Activated B cell treated with CpG ODN at 0.5 μM for 24 hours (primary cell): ENCODE measurements at regions of chr1 and their contacts with region 1.

Region 1: DNA sequence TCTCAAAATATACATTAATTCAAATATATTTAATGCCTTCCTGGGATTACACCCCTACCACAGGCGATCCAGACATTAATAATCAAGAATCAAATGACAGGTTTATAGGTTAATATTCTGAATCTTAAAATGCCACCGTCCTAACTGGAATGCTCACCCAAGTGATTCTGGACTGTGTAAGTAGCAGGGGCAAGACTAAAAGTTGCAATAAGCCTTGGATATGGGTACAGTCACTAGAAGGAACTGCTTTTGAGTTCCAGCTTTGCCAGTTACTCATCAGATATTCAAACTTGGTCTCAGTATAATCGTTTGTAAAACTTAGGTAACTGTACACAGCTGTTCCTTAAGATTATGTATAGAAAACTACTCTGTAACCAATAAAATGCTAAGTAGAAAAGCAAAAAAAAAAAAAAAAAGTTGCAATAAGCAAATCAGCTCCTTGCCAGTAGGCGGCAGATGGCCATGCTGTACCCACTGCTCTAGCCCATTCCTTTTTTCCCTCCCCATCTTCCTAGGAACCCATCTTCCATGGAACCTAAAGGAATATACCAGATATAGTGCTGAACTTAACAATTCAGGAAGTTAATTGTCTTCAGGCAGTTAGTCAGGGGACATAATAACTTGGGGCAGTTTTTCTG is 10.5 kb downstream of the RO60 start:
- DNase-seq: no peak
- ATAC-seq: peak; percentile 25
- H3K4me3 Mint-ChIP-seq: no peak overlapping the region
- H3K27ac Mint-ChIP-seq: peak overlapping the region; percentile 65
- H3K4me1 Mint-ChIP-seq: peaks cover 45% of the 10 kb centered on the region
- H3K27me3 Mint-ChIP-seq: no peaks in the 10 kb centered on the region
- CTCF ChIP-seq: no peak

Region 2: DNA sequence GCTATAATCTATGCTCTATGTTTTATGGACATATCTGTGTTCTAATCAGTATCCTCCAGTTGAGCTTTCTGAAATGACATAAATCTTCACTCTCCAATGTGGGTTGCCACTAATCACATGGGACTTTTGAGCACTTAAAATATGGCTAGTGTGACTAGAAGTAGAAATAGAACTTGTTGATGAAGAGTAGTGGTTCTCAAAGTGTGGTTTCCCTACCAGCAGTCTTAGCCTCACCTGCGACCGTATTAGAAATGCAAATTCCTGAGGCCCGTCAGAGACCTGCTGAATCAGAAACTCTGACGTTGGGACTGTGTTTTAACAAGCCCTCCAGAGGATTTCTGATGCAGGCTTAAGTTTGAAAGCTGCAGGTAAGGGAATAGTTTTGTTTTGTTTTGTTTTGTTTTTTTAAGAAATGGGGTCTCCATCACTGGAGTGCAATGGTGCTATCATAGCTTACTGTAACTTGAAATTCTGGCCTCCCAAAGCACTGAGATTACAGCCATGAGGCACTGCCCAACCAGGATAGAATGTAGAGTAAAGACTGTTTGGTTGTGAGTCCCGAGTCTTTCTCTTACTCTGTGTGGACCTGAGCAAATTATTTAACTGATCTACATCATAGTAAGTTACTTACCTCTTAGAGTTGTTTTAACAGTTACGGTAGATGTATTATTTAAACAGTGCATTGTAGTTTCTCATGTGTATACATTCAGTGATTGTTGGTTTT is 13.7 kb after region 1 on chr1:
- CTCF ChIA-PET with region 1: no interaction called
- POLR2A ChIA-PET with region 1: interaction called, 3 read pairs
- intact Hi-C with region 1: loop called (anchors 2 kb)
- DNase-seq: no peak
- ATAC-seq: peak; percentile 72
- H3K4me3 Mint-ChIP-seq: no peak overlapping the region
- H3K27ac Mint-ChIP-seq: no peak overlapping the region
- H3K4me1 Mint-ChIP-seq: peaks cover 5% of the 10 kb centered on the region
- H3K27me3 Mint-ChIP-seq: no peaks in the 10 kb centered on the region
- CTCF ChIP-seq: no peak